ENCODE measurements at regions of chr1 and their contacts with region 1.

Region 1: DNA sequence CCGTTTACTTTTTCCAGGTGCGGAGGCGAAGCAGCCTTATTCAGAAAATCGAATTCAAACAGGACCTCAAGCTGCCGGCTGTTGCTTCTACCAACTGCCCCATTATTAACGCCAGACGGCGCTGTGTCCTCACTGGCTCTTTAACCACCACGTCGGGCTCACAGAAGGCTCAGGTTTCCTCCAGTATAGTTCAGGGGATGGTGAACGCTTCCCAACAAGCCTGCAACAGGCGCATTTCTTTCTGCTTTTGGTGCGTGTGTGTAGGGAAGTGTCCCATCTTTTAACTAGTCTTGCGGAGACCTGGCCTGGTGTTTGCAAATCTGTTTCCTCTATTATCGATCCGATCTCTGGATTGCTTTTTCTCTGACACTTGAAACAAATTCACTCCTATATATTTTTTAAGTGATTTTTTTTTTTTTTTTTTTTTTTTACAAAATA is 791 bp upstream of the STUM start:
- DNase-seq: peak; percentile 98
- H3K4me3 Mint-ChIP-seq: no peak overlapping the region
- H3K27ac Mint-ChIP-seq: no peak overlapping the region
- H3K4me1 Mint-ChIP-seq: peaks cover 14% of the 10 kb centered on the region
- H3K27me3 Mint-ChIP-seq: peaks cover 51% of the 10 kb centered on the region
- CTCF ChIP-seq: peak; percentile 99

Region 2: GRCh38 chr1:226349801-226350518 is 197.8 kb before region 1 on chr1:
- CTCF ChIA-PET with region 1: no interaction called
- POLR2A ChIA-PET with region 1: no interaction called
- intact Hi-C with region 1: no loop called
- DNase-seq: no peak
- H3K4me3 Mint-ChIP-seq: no peak overlapping the region
- H3K27ac Mint-ChIP-seq: no peak overlapping the region
- H3K4me1 Mint-ChIP-seq: no peaks in the 10 kb centered on the region
- H3K27me3 Mint-ChIP-seq: no peaks in the 10 kb centered on the region
- CTCF ChIP-seq: no peak

Region 3: GRCh38 chr1:226487921-226488546 is 59.7 kb before region 1 on chr1:
- CTCF ChIA-PET with region 1: interaction called, 5 read pairs
- POLR2A ChIA-PET with region 1: no interaction called
- intact Hi-C with region 1: loop called (anchors 1 kb)
- DNase-seq: peak; percentile 75
- H3K4me3 Mint-ChIP-seq: no peak overlapping the region
- H3K27ac Mint-ChIP-seq: peak overlapping the region; percentile 44
- H3K4me1 Mint-ChIP-seq: peaks cover 13% of the 10 kb centered on the region
- H3K27me3 Mint-ChIP-seq: no peaks in the 10 kb centered on the region
- CTCF ChIP-seq: peak; percentile 27

Region 4: GRCh38 chr1:226565476-226565875 is 17.7 kb after region 1 on chr1:
- CTCF ChIA-PET with region 1: interaction called, 13 read pairs
- POLR2A ChIA-PET with region 1: no interaction called
- intact Hi-C with region 1: no loop called
- DNase-seq: no peak
- H3K4me3 Mint-ChIP-seq: no peak overlapping the region
- H3K27ac Mint-ChIP-seq: no peak overlapping the region
- H3K4me1 Mint-ChIP-seq: no peaks in the 10 kb centered on the region
- H3K27me3 Mint-ChIP-seq: peaks cover 45% of the 10 kb centered on the region
- CTCF ChIP-seq: no peak

Region 5: GRCh38 chr1:226608699-226609505 is 61.1 kb after region 1 on chr1:
- CTCF ChIA-PET with region 1: interaction called, 23 read pairs
- POLR2A ChIA-PET with region 1: interaction called, 17 read pairs
- intact Hi-C with region 1: loop called (anchors 1 kb)
- DNase-seq: peak; percentile 83
- H3K4me3 Mint-ChIP-seq: no peak overlapping the region
- H3K27ac Mint-ChIP-seq: no peak overlapping the region
- H3K4me1 Mint-ChIP-seq: peaks cover 6% of the 10 kb centered on the region
- H3K27me3 Mint-ChIP-seq: no peaks in the 10 kb centered on the region
- CTCF ChIP-seq: peak; percentile 99

Region 6: DNA sequence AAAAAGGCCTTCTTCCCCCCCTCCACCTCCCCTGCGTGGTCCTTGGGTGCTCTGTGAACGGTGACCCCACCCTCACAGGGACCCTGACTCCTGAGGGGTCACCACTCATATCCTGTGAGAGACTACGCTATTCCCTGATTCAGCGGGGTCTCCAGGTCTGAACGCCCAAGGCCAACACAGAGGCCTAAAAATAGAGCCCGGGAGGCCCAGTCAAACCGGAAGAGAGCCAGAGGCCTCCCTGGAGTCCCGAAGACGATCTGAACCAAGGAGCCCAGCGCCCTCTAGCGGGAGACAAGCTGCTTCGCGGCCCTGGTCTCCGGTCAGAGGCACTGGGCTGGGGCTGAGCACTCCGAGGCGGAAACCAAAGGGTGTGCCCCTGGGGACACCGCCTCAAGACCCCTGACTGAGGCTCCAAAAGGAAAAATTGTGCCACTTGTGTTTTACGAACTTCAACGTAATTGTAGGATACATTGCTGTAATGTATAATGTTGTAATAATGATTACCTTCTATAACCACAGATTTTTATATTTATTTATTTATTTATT is 280.3 kb after region 1 on chr1:
- CTCF ChIA-PET with region 1: interaction called, 38 read pairs
- POLR2A ChIA-PET with region 1: interaction called, 4 read pairs
- intact Hi-C with region 1: loop called (anchors 1 kb)
- DNase-seq: peak; percentile 100
- H3K4me3 Mint-ChIP-seq: no peak overlapping the region
- H3K27ac Mint-ChIP-seq: no peak overlapping the region
- H3K4me1 Mint-ChIP-seq: no peaks in the 10 kb centered on the region
- H3K27me3 Mint-ChIP-seq: no peaks in the 10 kb centered on the region
- CTCF ChIP-seq: peak; percentile 100